HEK293T (cell line): ENCODE measurements at regions of chr10 and their contacts with region 1.

Region 1: DNA sequence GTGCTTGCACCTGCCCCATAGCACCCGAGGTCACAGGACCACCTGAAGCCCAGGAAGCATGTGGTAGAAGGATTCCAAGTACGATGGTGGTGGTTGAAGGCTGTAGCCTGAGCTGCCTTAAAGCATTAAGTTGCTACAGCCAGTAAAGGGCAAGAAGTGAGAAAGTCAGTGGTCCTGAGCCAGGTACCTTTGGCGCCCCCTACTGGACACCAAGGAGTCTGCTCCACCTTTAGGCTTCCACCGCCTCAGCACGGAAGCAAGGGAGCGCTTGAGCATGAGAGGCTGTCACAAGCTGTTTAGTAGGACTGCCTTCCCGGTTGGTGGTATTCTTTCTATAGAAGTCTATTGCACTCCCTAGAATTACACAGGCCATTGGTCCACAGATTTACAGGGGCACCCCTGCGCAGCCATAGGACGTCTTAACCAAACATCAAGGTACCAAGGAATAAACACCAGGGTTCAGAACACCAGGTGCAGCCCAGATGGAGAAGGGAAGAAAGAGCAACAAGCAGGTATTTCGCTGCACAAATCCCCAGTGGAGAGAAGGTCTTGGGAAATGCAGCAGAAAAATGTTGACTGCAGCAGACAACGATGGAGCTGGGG is 2.2 kb downstream of the CRTAC1 start:
- DNase-seq: peak; percentile 92

Region 2: GRCh38 chr10:97475936-97476594 is 552.2 kb before region 1 on chr10:
- CTCF ChIA-PET with region 1: no interaction called
- POLR2A ChIA-PET with region 1: no interaction called
- DNase-seq: no peak

Region 3: GRCh38 chr10:97914837-97915211 is 113.4 kb before region 1 on chr10:
- CTCF ChIA-PET with region 1: interaction called, 11 read pairs
- POLR2A ChIA-PET with region 1: no interaction called
- DNase-seq: peak; percentile 89

Region 4: DNA sequence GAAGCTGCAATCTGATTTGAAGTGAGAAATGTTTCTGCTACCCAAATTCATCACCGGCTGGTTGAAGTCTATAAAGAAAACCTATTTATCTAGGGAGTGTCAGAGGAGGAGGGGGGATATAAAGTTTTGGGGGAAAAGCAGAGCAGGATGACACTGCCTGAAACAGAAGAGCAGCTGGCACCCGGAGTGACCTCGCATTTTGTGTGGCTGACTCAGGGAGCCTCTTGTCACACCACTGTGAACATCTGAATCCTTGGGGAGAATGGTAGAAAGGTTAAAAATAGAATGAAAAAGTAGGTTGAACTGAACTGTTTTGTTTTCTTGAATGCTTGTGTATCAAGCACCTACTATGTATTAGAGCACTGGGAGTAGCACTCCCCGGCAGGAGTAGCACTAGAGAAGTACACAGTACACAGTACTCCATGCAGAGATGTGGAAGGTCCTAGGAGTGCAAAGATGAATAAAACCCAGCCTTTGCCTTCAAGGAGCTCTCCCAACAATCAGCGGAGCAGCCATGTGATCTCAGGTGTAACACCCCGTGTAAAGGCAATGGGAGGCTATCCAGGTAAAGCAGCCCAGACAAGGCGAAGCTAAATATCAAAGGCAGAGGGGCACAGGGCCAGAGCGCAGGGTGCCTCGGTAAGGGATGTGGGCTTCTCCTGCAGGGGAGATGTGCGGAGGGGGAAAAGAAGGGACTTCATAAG is 11.3 kb before region 1 on chr10:
- CTCF ChIA-PET with region 1: interaction called, 15 read pairs
- POLR2A ChIA-PET with region 1: no interaction called
- DNase-seq: no peak

Region 5: GRCh38 chr10:98041372-98042043 is 13.2 kb after region 1 on chr10:
- CTCF ChIA-PET with region 1: interaction called, 26 read pairs
- POLR2A ChIA-PET with region 1: interaction called, 7 read pairs
- DNase-seq: peak; percentile 75